Activated naive CD4-positive, alpha-beta T cell treated with anti-CD3 and anti-CD28 coated beads for 36 hours (primary cell): ENCODE measurements at regions of chr4 and their contacts with region 1.

Region 1: GRCh38 chr4:89077761-89078160 is 20.8 kb upstream of the FAM13A start:
- DNase-seq: no peak
- H3K4me3 Mint-ChIP-seq: no peak overlapping the region
- H3K27ac Mint-ChIP-seq: no peak overlapping the region
- H3K4me1 Mint-ChIP-seq: peaks cover 12% of the 10 kb centered on the region
- H3K27me3 Mint-ChIP-seq: peaks cover 8% of the 10 kb centered on the region

Region 2: DNA sequence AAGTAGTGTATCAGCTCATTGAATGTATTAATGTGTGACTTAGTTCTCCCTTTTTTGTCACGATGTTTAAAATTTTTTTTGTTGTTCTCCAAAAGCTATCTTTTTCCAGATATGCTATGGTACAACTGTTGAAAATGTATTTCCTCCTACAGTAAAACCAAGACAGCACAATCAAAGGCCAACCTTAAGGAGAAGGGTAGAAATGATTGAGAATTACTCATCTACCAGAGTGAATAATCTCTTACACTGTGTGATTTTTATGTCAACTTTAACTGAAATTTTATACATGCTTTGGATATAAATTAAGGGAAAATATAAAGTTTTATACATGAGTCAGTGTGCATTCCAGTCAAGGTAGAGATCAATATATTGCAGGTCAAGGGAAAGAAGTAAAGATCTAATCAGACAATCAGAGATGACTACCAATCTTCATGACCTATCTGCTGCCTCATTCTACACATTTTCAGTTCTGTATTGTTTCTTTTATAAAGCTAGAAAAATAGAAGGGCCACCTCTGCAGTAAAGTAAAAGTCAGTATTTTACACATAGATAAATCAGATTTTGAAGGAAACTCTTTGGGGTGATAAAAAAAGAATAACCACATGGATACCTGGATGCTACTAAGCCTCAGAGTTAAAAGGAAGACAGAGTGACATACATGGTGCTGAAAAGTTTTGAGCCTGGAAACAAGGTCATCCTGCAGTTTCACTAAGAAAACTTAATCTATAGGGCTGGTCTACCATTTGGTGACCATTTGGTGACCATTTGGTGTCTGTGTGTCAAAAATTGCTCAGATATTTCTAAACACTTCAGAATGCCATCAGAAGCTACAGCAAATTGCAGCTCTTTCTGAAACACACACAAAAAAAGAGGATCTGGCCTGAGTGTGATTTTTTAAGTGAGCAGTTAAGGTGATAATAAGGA is 22.3 kb before region 1 on chr4:
- CTCF ChIA-PET with region 1: no interaction called
- intact Hi-C with region 1: loop called (anchors 1 kb)
- DNase-seq: no peak
- H3K4me3 Mint-ChIP-seq: no peak overlapping the region
- H3K27ac Mint-ChIP-seq: no peak overlapping the region
- H3K4me1 Mint-ChIP-seq: peaks cover 32% of the 10 kb centered on the region
- H3K27me3 Mint-ChIP-seq: peaks cover 7% of the 10 kb centered on the region

Region 3: GRCh38 chr4:89579771-89580170 is 502.0 kb after region 1 on chr4:
- CTCF ChIA-PET with region 1: no interaction called
- intact Hi-C with region 1: no loop called
- DNase-seq: no peak
- H3K4me3 Mint-ChIP-seq: no peak overlapping the region
- H3K27ac Mint-ChIP-seq: no peak overlapping the region
- H3K4me1 Mint-ChIP-seq: no peaks in the 10 kb centered on the region
- H3K27me3 Mint-ChIP-seq: no peaks in the 10 kb centered on the region